Naive thymus-derived CD8-positive, alpha-beta T cell (primary cell): ENCODE measurements at regions of chr3 and their contacts with region 1.

Region 1: GRCh38 chr3:151199554-151200438 is 3.2 kb downstream of the GPR171 start:
- DNase-seq: peak in 1 of 10 donors; percentile 23
- ATAC-seq: peak in 1 of 2 donors; percentile 14
- H3K4me3 Mint-ChIP-seq: peak overlapping the region; percentile 60 to 87 (median 80)
- H3K27ac Mint-ChIP-seq: peak overlapping the region; percentile 46 to 96 (median 93)
- H3K4me1 Mint-ChIP-seq: peaks cover 14 to 54% (median 43%) of the 10 kb centered on the region in 4 donors
- H3K27me3 Mint-ChIP-seq: no peaks in the 10 kb centered on the region

Region 2: DNA sequence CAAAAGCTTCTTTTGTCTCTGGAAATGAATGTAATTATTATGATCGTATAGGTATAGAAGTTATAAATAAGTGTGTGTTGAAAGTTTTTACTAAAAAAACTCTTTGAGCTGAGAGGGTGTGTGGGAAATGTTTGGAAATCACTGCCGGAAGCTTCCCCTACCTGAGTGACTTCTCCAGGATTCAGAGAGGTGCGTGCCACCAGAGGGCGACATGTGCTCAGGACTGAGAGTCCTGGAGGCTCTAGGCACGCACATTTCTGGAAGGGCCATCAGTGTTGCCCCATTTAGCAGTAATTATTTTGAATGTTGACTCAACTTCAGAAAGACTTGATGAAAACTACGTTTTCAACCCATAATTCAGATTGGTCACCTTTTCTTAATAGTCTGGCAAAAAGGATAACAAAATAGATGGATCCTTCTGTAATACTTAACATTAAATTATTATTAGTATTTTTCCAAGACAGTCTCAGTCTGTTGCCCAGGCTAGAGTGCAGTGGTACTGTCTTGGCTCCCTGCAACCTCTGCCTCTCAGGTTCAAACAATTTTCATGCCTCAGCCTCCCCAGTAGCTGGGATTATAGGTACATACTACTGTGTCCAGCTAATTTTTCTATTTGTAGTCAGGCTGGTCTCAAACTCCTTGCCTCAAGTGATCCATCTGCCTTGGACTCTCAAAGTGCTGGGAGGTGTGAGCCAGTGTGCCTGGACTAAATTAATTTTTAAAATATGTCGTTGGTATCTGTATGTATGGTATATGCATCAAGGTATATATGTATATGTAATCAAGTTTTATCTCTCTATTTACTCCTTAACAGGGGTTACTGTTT is 31.3 kb before region 1 on chr3:
- POLR2A ChIA-PET with region 1: interaction called, 18 read pairs
- DNase-seq: peak; percentile 56 to 91 (median 72)
- ATAC-seq: peak; percentile 57 to 81
- H3K4me3 Mint-ChIP-seq: no peak overlapping the region
- H3K27ac Mint-ChIP-seq: peak overlapping the region in 1 of 10 donors; percentile 62
- H3K4me1 Mint-ChIP-seq: peaks cover 19 to 41% (median 37%) of the 10 kb centered on the region in 4 donors
- H3K27me3 Mint-ChIP-seq: no peaks in the 10 kb centered on the region

Region 3: GRCh38 chr3:151183265-151183671 is 16.5 kb before region 1 on chr3:
- POLR2A ChIA-PET with region 1: interaction called, 11 read pairs
- DNase-seq: peak in 2 of 10 donors; percentile 41 to 56
- ATAC-seq: peak; percentile 62 to 83
- H3K4me3 Mint-ChIP-seq: peak overlapping the region; percentile 41 to 81 (median 77)
- H3K27ac Mint-ChIP-seq: peak overlapping the region; percentile 41 to 92 (median 77)
- H3K4me1 Mint-ChIP-seq: peaks cover 20 to 40% (median 29%) of the 10 kb centered on the region in 4 donors
- H3K27me3 Mint-ChIP-seq: peaks cover 0 to 1% (median 0%) of the 10 kb centered on the region in 5 donors